Heart right ventricle (tissue), 16 donors: ENCODE measurements at regions of chr19 and their contacts with region 1.

Region 1: DNA sequence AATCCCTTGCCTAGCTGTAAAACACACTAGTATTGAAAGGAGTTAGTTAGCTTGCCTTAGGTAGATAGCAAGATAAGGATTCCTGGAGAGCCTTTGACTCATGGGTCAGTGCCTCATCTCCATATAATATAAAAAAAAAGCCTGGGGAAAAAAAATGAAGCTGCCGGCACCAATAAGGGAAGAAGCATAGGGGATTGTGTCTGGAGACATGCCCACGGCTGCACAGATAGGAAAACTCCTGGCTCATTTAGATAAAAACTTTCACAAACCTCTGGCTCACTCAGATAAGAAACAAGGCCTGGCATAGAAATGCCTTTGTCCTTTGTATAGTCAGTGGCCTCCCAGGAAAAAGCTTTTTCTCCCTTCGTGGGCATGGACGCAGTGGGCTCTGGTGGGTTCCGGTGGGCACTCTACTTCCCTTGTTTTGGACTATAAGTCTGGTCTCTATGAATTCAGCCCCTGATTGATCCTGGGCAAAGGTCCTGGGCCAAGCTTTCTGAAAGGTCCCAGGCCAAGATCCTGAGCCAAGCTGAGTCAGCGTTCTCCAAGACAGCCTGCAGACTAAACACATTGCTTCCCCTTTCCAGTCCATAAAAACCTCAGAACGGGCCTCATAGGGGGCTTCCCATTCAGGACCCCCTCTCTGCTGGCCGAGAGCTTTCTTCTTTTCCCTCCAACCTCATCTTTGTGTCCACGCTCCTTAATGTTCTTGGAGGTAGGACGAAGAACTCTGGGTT is 4.9 kb upstream of the OR7A17 start:
- DNase-seq: peak in 1 of 2 donors; percentile 4
- ATAC-seq: no peak
- H3K4me3 ChIP-seq: no peak overlapping the region
- H3K27ac ChIP-seq: peak overlapping the region in 1 of 10 donors; percentile 15
- H3K4me1 ChIP-seq: peaks cover 0 to 9% (median 6%) of the 10 kb centered on the region in 9 donors
- H3K27me3 ChIP-seq: peaks cover 0 to 40% (median 19%) of the 10 kb centered on the region in 7 donors
- CTCF ChIP-seq: no peak

Region 2: DNA sequence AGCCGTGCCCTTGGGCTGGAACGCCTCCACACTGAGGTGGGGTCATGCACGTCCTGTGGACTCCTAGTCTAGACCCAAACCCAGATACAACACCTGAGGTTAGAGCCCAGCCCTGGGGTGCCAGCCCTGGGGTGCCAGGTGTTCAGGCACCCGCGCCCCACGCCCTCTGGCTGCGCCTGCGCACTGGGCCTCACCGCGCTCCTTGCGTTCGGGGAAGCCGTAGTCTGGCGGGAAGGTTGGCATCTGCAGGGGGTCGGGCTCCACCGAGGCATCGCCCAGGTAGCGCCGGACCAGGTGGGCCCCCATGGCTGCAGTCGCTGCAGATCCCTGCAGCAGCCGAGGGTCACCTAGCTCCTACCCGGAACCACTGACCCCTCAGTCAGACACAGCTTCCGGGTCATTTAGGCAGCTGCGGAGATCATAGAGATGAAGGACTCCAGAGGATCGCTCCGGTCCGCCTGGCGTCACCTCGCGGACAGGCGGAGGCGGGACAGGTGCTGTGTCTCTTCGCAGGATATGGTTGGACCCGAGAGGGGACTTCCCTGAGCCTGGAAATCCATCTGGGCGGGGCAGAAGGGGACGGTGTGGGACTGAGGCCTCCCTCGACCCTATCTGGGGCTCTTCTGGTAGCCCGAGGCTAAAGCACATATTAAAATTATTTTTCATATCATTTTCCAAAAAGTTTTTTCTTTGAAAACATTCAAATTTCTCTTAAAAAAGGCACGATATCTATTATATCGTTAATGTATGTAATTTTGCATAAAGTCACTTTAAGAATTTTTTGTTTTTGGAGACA is 318.9 kb before region 1 on chr19 and contains the start of gene NDUFB7:
- intact Hi-C with region 1: loop called in 7 of 10 experiments (anchors 5 to 10 kb)
- DNase-seq: peak; percentile 89 to 92
- ATAC-seq: peak; percentile 95 to 98 (median 98)
- H3K4me3 ChIP-seq: peak within 1 kb of the TSS; percentile 69 to 99 (median 96)
- H3K27ac ChIP-seq: peak within 1 kb of the TSS; percentile 70 to 95 (median 92)
- H3K4me1 ChIP-seq: peaks cover 4 to 47% (median 32%) of the 10 kb centered on the region in 9 donors
- H3K27me3 ChIP-seq: no peaks in the 10 kb centered on the region
- CTCF ChIP-seq: peak; percentile 53 to 91 (median 70)
- total RNA-seq, gene NDUFB7: 347 to 525 (median 467) TPM

Region 3: GRCh38 chr19:14577885-14578427 is 312.9 kb before region 1 on chr19:
- intact Hi-C with region 1: loop called in 7 of 10 experiments (anchors 5 to 10 kb)
- DNase-seq: no peak
- ATAC-seq: no peak
- H3K4me3 ChIP-seq: no peak overlapping the region
- H3K27ac ChIP-seq: no peak overlapping the region
- H3K4me1 ChIP-seq: peaks cover 0 to 11% (median 0%) of the 10 kb centered on the region in 9 donors
- H3K27me3 ChIP-seq: no peaks in the 10 kb centered on the region
- CTCF ChIP-seq: no peak

Region 4: GRCh38 chr19:14786421-14786851 is 104.4 kb before region 1 on chr19:
- intact Hi-C with region 1: loop called in 3 of 10 experiments (anchors 2 to 5 kb)
- DNase-seq: peak in 1 of 2 donors; percentile 21
- ATAC-seq: peak in 1 of 8 donors; percentile 63
- H3K4me3 ChIP-seq: no peak overlapping the region
- H3K27ac ChIP-seq: peak overlapping the region in 1 of 10 donors; percentile 83
- H3K4me1 ChIP-seq: peaks cover 0 to 44% (median 0%) of the 10 kb centered on the region in 9 donors
- H3K27me3 ChIP-seq: peaks cover 0 to 23% (median 12%) of the 10 kb centered on the region in 7 donors
- CTCF ChIP-seq: peak; percentile 24 to 83 (median 55)

Region 5: GRCh38 chr19:14821937-14822336 is 68.9 kb before region 1 on chr19:
- intact Hi-C with region 1: no loop called
- DNase-seq: no peak
- ATAC-seq: no peak
- H3K4me3 ChIP-seq: no peak overlapping the region
- H3K27ac ChIP-seq: no peak overlapping the region
- H3K4me1 ChIP-seq: no peaks in the 10 kb centered on the region
- H3K27me3 ChIP-seq: peaks cover 0 to 29% (median 9%) of the 10 kb centered on the region in 7 donors
- CTCF ChIP-seq: no peak